PC-3 (cell line): ENCODE measurements at regions of chr6 and their contacts with region 1.

Region 1: DNA sequence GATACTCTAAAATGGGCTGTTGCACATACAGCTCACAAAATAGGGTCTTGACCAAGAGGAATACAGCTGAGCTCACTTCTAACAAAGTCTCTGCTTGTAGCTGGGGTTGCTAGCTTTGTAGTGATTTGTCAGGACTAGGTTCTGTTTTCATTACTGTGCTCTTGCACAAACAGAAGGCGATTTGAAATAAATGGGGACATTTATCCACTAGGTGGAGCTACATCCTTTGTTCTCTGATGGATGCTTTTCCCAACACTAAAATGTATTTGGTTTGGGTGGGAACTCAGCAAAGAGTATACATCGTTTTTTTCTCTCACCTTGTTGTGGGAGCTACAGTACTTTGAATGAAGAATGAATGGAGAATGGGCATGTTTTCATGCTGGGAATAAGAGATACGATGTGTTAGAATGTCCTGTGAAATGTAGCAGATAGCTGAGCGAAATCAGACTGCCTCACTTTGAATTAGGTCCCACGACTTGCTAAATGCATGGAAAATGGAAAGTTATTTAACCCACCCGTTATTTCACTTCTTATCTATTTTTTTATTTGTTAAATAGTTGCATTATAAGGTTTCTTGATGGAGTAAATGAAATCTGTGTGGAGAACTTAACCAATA is 494.7 kb upstream of the MAP3K7 start:
- DNase-seq: peak; percentile 59
- ATAC-seq: peak; percentile 40
- H3K4me3 ChIP-seq: no peak overlapping the region
- H3K27ac ChIP-seq: no peak overlapping the region
- H3K4me1 ChIP-seq: no peaks in the 10 kb centered on the region
- H3K27me3 ChIP-seq: no peaks in the 10 kb centered on the region
- CTCF ChIP-seq: peak; percentile 75

Region 2: DNA sequence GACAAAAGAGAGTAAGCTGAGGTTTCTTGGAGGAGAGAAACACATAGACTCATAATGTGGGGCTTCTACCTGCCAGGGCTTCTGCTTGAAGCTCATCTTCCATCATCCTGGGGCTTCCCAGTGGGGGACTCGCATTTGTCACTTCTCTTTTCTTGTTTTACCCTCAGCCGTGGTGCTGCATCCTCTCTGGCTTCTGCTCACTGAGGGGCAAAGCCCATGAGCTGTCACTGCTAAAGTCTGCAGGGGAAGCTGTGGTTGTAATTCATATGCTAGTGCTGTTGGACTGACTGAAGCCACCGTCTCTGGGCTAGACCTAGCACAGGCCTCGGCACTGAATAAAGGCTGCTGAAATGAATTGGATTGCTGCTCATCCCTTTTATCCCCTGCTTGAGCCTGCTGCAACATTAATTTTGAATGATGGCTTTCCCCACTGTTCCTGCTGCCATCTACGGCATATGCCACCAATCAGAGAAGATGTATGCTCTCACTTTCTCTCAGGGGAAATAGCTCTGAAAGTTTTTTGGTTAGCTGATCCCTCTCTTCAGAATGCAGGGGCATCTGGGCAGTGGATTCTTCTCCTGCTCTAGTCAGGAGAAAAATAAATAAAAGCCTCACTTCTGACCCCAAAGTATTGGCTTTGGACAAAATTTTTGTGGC is 73.7 kb after region 1 on chr6:
- CTCF ChIA-PET with region 1: no interaction called
- POLR2A ChIA-PET with region 1: no interaction called
- intact Hi-C with region 1: no loop called
- DNase-seq: no peak
- ATAC-seq: no peak
- H3K4me3 ChIP-seq: no peak overlapping the region
- H3K27ac ChIP-seq: no peak overlapping the region
- H3K4me1 ChIP-seq: no peaks in the 10 kb centered on the region
- H3K27me3 ChIP-seq: 0 out of 2 replicates have a peak, but pooled peaks cover 4% of the 10 kb centered on the region
- CTCF ChIP-seq: no peak

Region 3: DNA sequence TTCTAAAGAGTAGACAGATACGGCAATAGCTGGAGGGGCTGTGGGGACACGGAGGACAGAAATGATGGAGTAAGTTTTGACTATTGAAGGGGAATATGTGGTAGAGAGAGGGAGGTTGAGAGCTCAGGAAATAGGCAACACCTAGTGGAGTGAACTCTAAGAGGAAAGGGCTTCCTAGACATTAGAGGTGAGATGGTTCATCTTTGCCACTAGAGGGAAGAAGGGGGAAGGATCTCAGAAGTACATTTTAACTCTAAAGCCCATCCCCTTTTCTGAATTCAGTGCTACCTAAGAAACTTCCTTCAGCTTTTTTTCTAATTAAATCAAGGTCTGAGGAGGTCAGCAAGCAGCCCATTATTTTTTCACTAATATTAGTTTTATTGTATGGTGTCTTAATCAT is 194.8 kb after region 1 on chr6:
- CTCF ChIA-PET with region 1: no interaction called
- POLR2A ChIA-PET with region 1: no interaction called
- intact Hi-C with region 1: loop called (anchors 5 kb)
- DNase-seq: peak; percentile 16
- ATAC-seq: peak; percentile 67
- H3K4me3 ChIP-seq: no peak overlapping the region
- H3K27ac ChIP-seq: no peak overlapping the region
- H3K4me1 ChIP-seq: no peaks in the 10 kb centered on the region
- H3K27me3 ChIP-seq: no peaks in the 10 kb centered on the region
- CTCF ChIP-seq: peak; percentile 46

Region 4: DNA sequence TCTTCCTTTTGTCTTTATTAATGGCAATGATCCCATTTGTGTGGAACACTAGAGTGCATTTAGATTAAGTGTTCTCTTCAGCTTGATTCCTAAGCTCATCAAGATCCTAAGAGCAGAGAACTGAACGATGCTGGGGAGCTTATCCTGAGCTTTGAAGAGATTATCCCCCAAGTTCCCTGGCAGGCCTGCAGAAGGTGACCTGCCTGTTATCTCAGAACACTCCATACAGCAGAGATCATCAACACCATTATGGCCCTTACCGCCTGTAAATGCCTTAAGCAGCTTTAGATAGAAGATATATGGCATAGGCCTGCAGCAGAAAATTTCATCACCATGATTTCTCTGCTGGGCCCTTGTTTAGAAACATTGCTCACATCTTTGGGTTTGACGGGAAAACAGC is 285.2 kb after region 1 on chr6:
- CTCF ChIA-PET with region 1: no interaction called
- POLR2A ChIA-PET with region 1: no interaction called
- intact Hi-C with region 1: no loop called
- DNase-seq: no peak
- ATAC-seq: no peak
- H3K4me3 ChIP-seq: no peak overlapping the region
- H3K27ac ChIP-seq: no peak overlapping the region
- H3K4me1 ChIP-seq: no peaks in the 10 kb centered on the region
- H3K27me3 ChIP-seq: no peaks in the 10 kb centered on the region
- CTCF ChIP-seq: no peak